H1 (cell line): ENCODE measurements at regions of chr5 and their contacts with region 1.

Region 1: DNA sequence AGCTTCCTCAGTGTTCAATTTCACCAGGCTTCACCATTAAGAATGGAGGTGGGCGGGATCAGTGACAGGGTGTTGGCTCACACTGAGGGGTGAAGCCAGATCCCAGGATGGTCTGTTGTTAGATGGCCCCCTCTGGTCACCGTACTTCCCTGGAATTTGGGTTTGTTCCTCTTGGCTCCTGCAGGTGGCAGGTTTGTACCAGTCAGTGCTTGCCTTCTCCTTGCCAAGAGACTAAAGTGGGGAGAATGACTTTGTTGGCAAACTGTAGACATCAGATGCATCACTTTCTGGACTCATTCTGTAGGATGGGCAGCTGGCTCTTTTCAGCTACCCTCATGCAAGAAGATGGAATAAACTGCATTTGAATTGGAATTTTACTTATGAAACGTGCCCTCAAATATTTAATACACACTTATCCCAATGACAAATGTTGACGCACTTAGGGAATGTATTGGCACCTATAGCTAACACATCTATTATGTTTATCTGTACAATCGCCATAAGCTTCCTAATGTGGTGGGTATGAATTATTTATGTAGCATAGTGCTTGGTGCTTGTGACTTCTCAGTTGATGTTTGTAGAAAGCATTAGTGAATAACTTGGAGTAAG is 31.4 kb upstream of the ANKRD55 start:
- DNase-seq: peak; percentile 67
- H3K4me3 ChIP-seq: no peak overlapping the region
- H3K27ac ChIP-seq: no peak overlapping the region
- H3K4me1 ChIP-seq: peaks cover 0 to 3% (median 0%) of the 10 kb centered on the region in 4 experiments; a peak in 1 of 7 replicates
- H3K27me3 ChIP-seq: no peaks in the 10 kb centered on the region
- CTCF ChIP-seq: peak; percentile 73 to 96 (median 94)
- EP300 ChIP-seq: no peak
- POLR2A ChIP-seq: no peak
- RAD21 ChIP-seq: peak; percentile 89 to 92

Region 2: DNA sequence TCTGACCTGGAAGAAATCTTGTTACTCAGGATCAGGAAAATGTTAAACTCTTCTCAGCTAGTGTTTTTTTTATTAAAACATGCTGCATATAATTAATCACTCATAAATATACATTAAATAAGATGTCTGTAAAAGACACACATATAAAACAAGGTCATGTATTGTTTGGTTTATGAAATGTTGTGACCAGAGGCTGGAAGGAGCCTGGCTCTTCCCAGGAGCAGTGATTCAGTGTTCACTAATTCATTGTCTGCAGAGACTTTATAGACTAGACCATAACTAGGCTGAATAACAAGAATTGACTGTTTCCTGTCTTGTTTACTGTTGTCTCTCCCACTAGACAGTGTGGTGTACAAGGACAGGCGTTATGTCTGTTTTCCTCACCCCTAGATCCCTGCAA is 17.7 kb after region 1 on chr5:
- CTCF ChIA-PET with region 1: interaction called, 16 read pairs
- POLR2A ChIA-PET with region 1: no interaction called
- DNase-seq: no peak
- H3K4me3 ChIP-seq: no peak overlapping the region
- H3K27ac ChIP-seq: no peak overlapping the region
- H3K4me1 ChIP-seq: peaks cover 0 to 8% (median 0%) of the 10 kb centered on the region in 4 experiments; a peak in 2 of 7 replicates
- H3K27me3 ChIP-seq: no peaks in the 10 kb centered on the region
- CTCF ChIP-seq: no peak
- EP300 ChIP-seq: no peak
- POLR2A ChIP-seq: no peak
- RAD21 ChIP-seq: no peak

Region 3: GRCh38 chr5:56838409-56839039 is 574.0 kb after region 1 on chr5:
- CTCF ChIA-PET with region 1: interaction called, 146 read pairs
- POLR2A ChIA-PET with region 1: no interaction called
- DNase-seq: no peak
- H3K4me3 ChIP-seq: no peak overlapping the region
- H3K27ac ChIP-seq: no peak overlapping the region
- H3K4me1 ChIP-seq: peaks cover 0 to 15% (median 3%) of the 10 kb centered on the region in 4 experiments; a peak in 3 of 7 replicates
- H3K27me3 ChIP-seq: no peaks in the 10 kb centered on the region
- CTCF ChIP-seq: peak in 2 of 3 experiments; percentile 26 to 49; a peak in 2 of 4 replicates
- EP300 ChIP-seq: no peak
- POLR2A ChIP-seq: no peak
- RAD21 ChIP-seq: peak; percentile 81 to 85